Endothelial cell of umbilical vein (primary cell): ENCODE measurements at regions of chr6 and their contacts with region 1.

Region 1: DNA sequence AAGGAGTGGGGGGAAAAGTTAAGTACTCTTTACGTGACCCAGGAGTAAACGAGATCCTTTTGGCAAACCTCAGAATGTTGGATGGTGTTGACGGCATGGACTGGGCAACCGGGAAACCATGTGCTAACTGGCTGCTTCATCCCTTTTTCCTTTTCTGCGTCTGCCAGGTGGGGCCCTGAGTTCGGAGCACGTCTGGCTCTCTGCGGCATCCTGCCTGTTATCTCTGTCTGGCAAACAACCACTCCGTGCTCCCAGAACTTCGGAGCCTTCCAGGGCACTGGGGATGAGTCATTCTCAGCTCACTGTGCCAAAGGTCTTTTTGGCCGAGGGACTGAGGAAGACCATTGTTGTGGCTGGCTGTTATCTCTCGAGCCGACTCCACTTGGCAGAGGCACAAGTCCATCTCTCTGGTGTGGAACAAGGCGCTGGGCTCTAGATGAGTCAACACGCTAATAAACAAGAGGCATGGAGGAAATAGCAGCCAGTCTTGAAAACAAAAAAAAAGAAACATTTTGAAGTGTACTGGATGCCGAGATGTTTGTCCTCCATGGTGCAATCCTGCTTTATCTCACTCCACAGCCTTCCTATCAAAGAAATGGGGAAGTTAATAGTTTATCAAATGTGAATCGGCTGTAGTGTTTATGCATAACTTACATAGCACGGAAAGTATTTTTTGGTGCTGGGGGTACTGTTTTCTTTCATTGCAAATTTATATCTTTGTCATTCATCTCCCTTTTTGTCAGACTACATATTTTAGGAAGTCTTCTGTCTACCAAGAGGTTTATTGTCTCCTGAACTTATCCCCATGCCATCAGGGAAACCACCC is 64.6 kb upstream of the TXNDC5 start:
- DNase-seq: peak; percentile 100
- H3K4me3 ChIP-seq: no peak overlapping the region
- H3K27ac ChIP-seq: peak overlapping the region; percentile 85
- H3K4me1 ChIP-seq: peaks cover 36% of the 10 kb centered on the region
- H3K27me3 ChIP-seq: no peaks in the 10 kb centered on the region
- CTCF ChIP-seq: no peak
- POLR2A ChIP-seq: peak; percentile 67

Region 2: GRCh38 chr6:7899101-7899888 is 75.9 kb before region 1 on chr6:
- CTCF ChIA-PET with region 1: interaction called, 3 read pairs
- POLR2A ChIA-PET with region 1: interaction called, 5 read pairs
- dilution Hi-C with region 1: no loop called
- intact Hi-C with region 1: loop called (anchors 1 kb)
- DNase-seq: peak; percentile 40
- H3K4me3 ChIP-seq: no peak overlapping the region
- H3K27ac ChIP-seq: peak overlapping the region; percentile 36
- H3K4me1 ChIP-seq: peaks cover 94% of the 10 kb centered on the region
- H3K27me3 ChIP-seq: no peaks in the 10 kb centered on the region
- CTCF ChIP-seq: no peak
- POLR2A ChIP-seq: peak; percentile 27

Region 3: DNA sequence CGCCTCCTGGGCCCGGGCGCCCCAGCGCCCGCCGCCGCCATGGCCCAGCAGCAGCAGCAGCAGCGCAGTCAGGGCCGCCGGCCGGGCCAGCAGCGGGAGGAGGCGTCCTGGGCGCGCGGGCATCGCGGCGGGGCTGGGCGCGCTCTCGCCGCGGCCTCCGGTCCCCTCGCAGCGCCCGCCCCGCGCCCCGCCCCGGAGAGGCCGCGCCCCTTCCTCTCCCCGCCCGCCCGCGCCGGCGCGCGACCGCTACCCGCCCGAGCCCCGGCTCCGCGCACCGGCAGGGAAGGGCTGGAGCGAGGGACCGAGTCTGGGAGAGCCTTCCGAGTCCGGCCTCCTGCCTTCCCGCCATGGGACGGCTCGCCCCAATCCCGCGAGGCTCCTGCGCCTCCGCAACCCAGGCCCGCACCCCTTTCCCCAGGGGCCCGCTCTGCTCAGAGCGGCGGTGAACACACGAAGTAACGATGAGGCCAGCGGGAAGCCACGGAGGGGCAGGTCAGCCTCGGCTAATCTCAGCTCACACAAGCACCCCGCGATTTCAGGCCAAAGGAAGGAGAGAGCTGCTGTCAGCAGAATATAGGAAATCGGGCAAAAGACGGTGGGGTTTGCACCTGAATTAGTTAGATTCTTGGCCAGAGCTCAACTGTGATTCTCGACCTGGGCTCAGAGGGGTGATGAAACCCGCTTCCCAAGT is 64.4 kb before region 1 on chr6 and contains the start of gene TXNDC5:
- CTCF ChIA-PET with region 1: interaction called, 14 read pairs
- POLR2A ChIA-PET with region 1: interaction called, 21 read pairs
- dilution Hi-C with region 1: no loop called
- intact Hi-C with region 1: loop called (anchors 1 kb)
- DNase-seq: peak; percentile 77
- H3K4me3 ChIP-seq: peak within 1 kb of the TSS; percentile 70 to 97 (median 76)
- H3K27ac ChIP-seq: peak within 1 kb of the TSS; percentile 94
- H3K4me1 ChIP-seq: peaks cover 45% of the 10 kb centered on the region
- H3K27me3 ChIP-seq: no peaks in the 10 kb centered on the region
- CTCF ChIP-seq: no peak
- POLR2A ChIP-seq: peak; percentile 76
- total RNA-seq, gene TXNDC5: 1,581 and 1,665 TPM in 2 replicates

Region 4: DNA sequence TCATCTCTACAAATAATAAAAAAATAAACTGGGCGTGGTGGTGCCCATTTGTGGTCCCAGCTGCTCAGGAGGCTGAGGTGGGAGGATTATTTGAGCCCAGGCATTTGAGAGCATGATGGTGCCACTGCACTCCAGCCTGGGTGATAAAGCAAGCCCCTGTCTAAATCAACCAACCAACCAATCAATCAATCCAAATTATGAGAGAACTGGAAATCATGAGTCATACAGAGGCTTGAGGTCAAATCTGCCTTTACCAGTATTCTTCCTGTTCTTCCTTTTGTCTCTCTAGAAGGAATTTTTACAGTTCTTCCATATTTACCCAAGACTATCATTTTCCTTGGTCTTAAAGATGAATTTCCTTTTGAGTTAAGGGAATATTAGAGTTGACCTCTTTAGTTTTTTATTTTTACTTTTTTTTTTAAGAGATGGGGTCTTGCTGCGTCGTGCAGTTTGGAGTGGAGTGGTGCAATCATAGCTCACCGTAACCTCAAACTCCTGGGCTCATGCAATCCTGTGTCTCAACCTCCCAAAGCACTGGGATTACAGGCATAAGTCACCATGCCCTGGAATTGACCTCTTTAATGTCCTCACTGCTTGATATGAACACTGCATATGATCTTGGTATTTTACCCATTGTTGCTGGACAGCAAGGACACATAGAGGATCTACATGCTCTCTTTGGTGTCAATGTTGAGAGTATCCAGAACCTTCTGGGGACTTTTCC is 20.5 kb before region 1 on chr6:
- CTCF ChIA-PET with region 1: interaction called, 3 read pairs
- POLR2A ChIA-PET with region 1: interaction called, 3 read pairs
- dilution Hi-C with region 1: no loop called
- intact Hi-C with region 1: loop called (anchors 1 kb)
- DNase-seq: peak; percentile 60
- H3K4me3 ChIP-seq: no peak overlapping the region
- H3K27ac ChIP-seq: no peak overlapping the region
- H3K4me1 ChIP-seq: peaks cover 27% of the 10 kb centered on the region
- H3K27me3 ChIP-seq: no peaks in the 10 kb centered on the region
- CTCF ChIP-seq: no peak
- POLR2A ChIP-seq: no peak

Region 5: GRCh38 chr6:7960848-7961247 is 14.3 kb before region 1 on chr6:
- CTCF ChIA-PET with region 1: interaction called, 3 read pairs
- POLR2A ChIA-PET with region 1: no interaction called
- dilution Hi-C with region 1: no loop called
- intact Hi-C with region 1: loop called (anchors 1 kb)
- DNase-seq: no peak
- H3K4me3 ChIP-seq: no peak overlapping the region
- H3K27ac ChIP-seq: peak overlapping the region; percentile 57
- H3K4me1 ChIP-seq: peaks cover 21% of the 10 kb centered on the region
- H3K27me3 ChIP-seq: no peaks in the 10 kb centered on the region
- CTCF ChIP-seq: no peak
- POLR2A ChIP-seq: no peak

Region 6: DNA sequence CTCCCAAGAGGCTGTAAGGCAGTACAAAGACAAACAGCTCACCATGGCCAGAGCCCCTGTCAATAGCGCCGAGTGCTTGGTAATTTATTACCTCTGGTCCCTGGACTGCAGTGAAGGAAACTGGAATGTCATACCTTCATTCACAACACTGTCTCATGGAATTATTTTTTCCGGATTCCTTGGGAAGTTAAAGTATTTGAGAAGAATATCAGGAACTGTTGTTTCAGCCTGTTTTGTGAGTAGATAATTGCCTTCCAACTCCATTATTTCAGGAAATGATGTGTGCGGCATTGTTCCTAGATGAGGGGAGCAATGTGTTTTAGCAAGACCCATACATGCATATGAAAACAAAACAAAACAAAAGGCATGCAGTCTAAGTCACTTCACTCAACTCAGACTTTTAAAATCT is 25.0 kb after region 1 on chr6:
- CTCF ChIA-PET with region 1: interaction called, 14 read pairs
- POLR2A ChIA-PET with region 1: interaction called, 3 read pairs
- dilution Hi-C with region 1: no loop called
- intact Hi-C with region 1: loop called (anchors 1 kb)
- DNase-seq: peak; percentile 99
- H3K4me3 ChIP-seq: no peak overlapping the region
- H3K27ac ChIP-seq: peak overlapping the region; percentile 96
- H3K4me1 ChIP-seq: peaks cover 89% of the 10 kb centered on the region
- H3K27me3 ChIP-seq: no peaks in the 10 kb centered on the region
- CTCF ChIP-seq: no peak
- POLR2A ChIP-seq: peak; percentile 87

Region 7: GRCh38 chr6:8082954-8083858 is 108.1 kb after region 1 on chr6:
- CTCF ChIA-PET with region 1: no interaction called
- POLR2A ChIA-PET with region 1: no interaction called
- dilution Hi-C with region 1: no loop called
- intact Hi-C with region 1: loop called (anchors 1 kb)
- DNase-seq: peak; percentile 95
- H3K4me3 ChIP-seq: peak overlapping the region in 1 of 3 experiments; percentile 16
- H3K27ac ChIP-seq: peak overlapping the region; percentile 93
- H3K4me1 ChIP-seq: peaks cover 64% of the 10 kb centered on the region
- H3K27me3 ChIP-seq: no peaks in the 10 kb centered on the region
- CTCF ChIP-seq: no peak
- POLR2A ChIP-seq: no peak